ENCODE measurements at regions of chr9 and their contacts with region 1.

Region 1: DNA sequence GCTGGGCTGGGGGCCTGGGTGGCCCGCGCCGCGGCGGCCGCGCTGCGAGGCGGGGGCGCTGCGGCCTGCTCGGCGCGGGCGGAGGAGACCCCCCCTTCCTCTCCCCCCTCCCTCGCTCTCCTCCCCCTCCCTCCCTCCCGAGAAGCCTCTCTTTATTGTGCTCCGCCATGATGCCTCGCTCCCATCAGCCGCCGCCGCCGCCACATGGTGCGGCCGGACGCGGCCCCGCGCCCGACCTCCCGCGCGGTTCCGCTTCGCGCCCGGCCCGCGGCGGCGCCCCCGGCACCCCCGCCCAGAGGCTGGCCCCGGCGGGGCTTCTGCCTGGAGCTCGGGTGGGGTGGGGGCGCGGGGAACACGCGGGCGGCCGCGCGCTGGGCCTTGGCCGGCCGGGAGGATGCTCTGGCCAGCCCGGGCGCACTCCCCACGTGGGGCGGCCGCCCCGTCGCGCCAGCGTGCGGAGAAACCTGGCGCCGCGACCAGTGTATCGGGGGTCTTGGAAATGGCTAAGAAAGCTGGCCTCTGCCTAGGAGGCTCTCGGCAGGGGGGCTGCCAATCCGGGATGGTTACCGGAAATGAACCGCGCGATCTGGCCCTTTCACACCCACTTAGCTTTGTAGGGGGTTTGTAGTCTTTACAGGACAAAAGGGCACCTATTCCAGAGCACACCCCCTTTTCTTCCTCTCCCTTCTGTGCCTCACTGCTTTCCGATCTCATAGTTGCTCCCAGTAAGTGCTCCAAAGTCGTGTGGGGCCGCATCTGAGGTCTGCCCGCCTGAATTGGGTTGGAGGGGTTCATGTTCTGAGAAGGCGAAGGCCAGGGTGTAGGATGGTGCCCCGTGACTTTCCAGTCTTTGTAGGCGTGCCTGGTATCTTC is 1.0 kb downstream of the SET start:
- DNase-seq: peak; percentile 41 to 74 (median 51)
- H3K4me3 ChIP-seq: peak overlapping the region; percentile 88
- H3K4me3 Mint-ChIP-seq: peak overlapping the region; percentile 90 to 100 (median 99)
- H3K27ac ChIP-seq: peak overlapping the region; percentile 88
- H3K27ac Mint-ChIP-seq: peak overlapping the region; percentile 89 to 100 (median 99)
- H3K4me1 ChIP-seq: peaks cover 47% of the 10 kb centered on the region
- H3K4me1 Mint-ChIP-seq: peaks cover 42 to 59% (median 55%) of the 10 kb centered on the region in 3 donors
- H3K27me3 ChIP-seq: no peaks in the 10 kb centered on the region
- H3K27me3 Mint-ChIP-seq: no peaks in the 10 kb centered on the region

Region 2: DNA sequence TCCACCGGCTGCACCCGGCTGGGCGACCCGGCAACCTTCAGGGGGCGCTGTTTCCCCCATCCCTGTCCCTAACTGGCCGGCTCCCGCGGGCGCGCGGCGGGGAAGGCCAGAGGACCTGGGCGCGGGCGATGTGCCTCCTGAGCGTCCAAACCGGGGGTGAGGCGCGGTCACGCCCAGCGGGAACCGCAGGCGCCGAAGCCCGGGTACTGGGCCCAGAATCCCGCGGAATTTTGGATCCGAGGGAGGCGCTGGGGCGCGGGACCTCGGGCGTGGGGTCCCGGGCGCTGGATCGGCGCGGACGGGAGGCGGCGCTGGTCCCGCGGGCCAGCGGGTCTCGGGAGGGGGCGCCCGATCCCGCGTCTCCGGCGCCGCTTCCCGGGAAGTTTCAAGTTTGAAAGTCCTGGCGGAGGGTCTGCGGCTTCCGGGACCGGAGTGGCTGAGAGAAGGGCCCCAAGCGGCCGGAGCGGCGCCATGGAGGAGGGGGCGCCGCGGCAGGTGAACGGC is 12.4 kb after region 1 on chr9 and contains the start of gene PKN3:
- CTCF ChIA-PET with region 1: interaction called, 22 read pairs
- POLR2A ChIA-PET with region 1: interaction called, 7 read pairs
- DNase-seq: peak; percentile 79 to 87 (median 81)
- H3K4me3 ChIP-seq: peak within 1 kb of the TSS; percentile 53
- H3K4me3 Mint-ChIP-seq: peak within 1 kb of the TSS; percentile 84 to 92 (median 87)
- H3K27ac ChIP-seq: peak within 1 kb of the TSS; percentile 57
- H3K27ac Mint-ChIP-seq: peak within 1 kb of the TSS; percentile 46 to 79 (median 72)
- H3K4me1 ChIP-seq: peaks cover 7% of the 10 kb centered on the region
- H3K4me1 Mint-ChIP-seq: peaks cover 7 to 17% (median 9%) of the 10 kb centered on the region in 3 donors
- H3K27me3 ChIP-seq: no peaks in the 10 kb centered on the region
- H3K27me3 Mint-ChIP-seq: peaks cover 0 to 1% of the 10 kb centered on the region in 2 donors
- total RNA-seq, gene PKN3: 7.5 to 7.9 TPM